MCF 10A (cell line): ENCODE measurements at regions of chr12 and their contacts with region 1.

Region 1: GRCh38 chr12:105330283-105330930 is at the start of gene C12orf75:
- DNase-seq: peak; percentile 59
- H3K4me3 Mint-ChIP-seq: peak within 1 kb of the TSS; percentile 71
- H3K27ac Mint-ChIP-seq: no peak within 1 kb of the TSS
- H3K4me1 Mint-ChIP-seq: peaks cover 28% of the 10 kb centered on the region
- H3K27me3 Mint-ChIP-seq: no peaks in the 10 kb centered on the region
- CTCF ChIP-seq: no peak
- total RNA-seq, gene C12orf75: 53.6 and 67.7 TPM in 2 replicates

Region 2: DNA sequence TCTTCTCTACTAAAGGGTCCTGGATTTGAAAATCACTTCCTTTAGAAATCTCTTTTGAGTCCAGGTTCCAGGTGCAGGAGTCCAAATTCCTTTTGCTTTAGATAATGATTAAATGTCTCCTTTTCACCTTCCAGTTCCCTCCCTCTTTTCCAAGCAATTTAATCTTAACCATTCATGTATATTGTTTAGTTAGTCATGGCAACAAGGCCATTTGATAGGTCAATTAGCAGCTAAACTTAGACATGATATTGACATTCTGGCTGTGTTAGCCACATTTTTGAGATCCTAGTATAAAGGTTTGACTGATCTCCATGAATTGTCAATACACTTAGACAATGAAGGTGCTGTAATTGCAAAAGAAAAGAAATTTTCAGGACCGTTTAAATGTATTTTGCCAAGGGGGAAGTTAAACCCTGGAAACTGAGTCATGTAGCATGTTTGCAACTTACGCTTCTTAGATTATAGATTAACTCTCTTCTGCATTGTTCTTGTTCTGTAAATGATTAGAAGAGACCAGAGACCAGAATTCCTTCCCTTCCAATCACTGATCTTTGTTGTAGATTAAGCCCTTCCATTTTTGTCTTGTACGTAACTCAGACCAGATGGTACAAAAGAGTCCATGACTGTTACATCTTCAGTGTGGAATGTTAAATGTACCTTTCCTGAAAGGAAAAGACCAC is 12.3 kb before region 1 on chr12:
- CTCF ChIA-PET with region 1: interaction called, 4 read pairs
- POLR2A ChIA-PET with region 1: interaction called, 23 read pairs
- intact Hi-C with region 1: no loop called
- DNase-seq: no peak
- H3K4me3 Mint-ChIP-seq: no peak overlapping the region
- H3K27ac Mint-ChIP-seq: no peak overlapping the region
- H3K4me1 Mint-ChIP-seq: peaks cover 8% of the 10 kb centered on the region
- H3K27me3 Mint-ChIP-seq: no peaks in the 10 kb centered on the region
- CTCF ChIP-seq: no peak

Region 3: GRCh38 chr12:105393587-105393986 is 63.2 kb after region 1 on chr12:
- CTCF ChIA-PET with region 1: no interaction called
- POLR2A ChIA-PET with region 1: no interaction called
- intact Hi-C with region 1: no loop called
- DNase-seq: peak; percentile 14
- H3K4me3 Mint-ChIP-seq: no peak overlapping the region
- H3K27ac Mint-ChIP-seq: no peak overlapping the region
- H3K4me1 Mint-ChIP-seq: no peaks in the 10 kb centered on the region
- H3K27me3 Mint-ChIP-seq: no peaks in the 10 kb centered on the region
- CTCF ChIP-seq: no peak